HCT116 (cell line): ENCODE measurements at regions of chr13 and their contacts with region 1.

Region 1: GRCh38 chr13:33228648-33229445 is 56.7 kb downstream of the STARD13 start:
- DNase-seq: peak; percentile 26
- ATAC-seq: peak; percentile 79
- H3K4me3 ChIP-seq: no peak overlapping the region
- H3K27ac ChIP-seq: no peak overlapping the region
- H3K4me1 ChIP-seq: no peaks in the 10 kb centered on the region
- H3K27me3 ChIP-seq: no peaks in the 10 kb centered on the region
- CTCF ChIP-seq: peak; percentile 63 to 94 (median 86); a peak in 5 of 6 replicates
- POLR2A ChIP-seq: no peak
- RAD21 ChIP-seq: peak; percentile 83

Region 2: DNA sequence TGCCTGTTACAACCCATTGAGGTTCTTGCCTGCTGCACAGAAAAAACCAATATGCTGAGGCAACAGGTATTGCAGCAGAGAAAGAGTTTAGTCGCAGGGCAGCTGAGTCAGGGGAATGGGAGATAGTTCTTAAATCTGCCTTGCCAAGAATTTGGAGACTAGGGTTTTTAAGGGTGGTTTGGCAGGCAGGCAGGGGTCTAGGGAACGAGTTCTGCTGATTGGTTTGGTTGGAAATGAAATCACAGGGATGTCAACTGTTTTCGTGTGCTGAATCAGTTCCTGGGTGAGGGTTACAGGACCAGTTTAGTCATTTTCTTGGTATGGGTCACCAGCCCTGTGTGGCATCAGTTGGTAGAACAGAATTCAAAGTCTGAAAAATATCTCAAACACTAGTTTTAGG is 606.0 kb before region 1 on chr13:
- CTCF ChIA-PET with region 1: no interaction called
- POLR2A ChIA-PET with region 1: no interaction called
- RAD21 ChIA-PET with region 1: no interaction called
- intact Hi-C with region 1: no loop called
- DNase-seq: no peak
- ATAC-seq: no peak
- H3K4me3 ChIP-seq: no peak overlapping the region
- H3K27ac ChIP-seq: no peak overlapping the region
- H3K4me1 ChIP-seq: no peaks in the 10 kb centered on the region
- H3K27me3 ChIP-seq: no peaks in the 10 kb centered on the region
- CTCF ChIP-seq: no peak
- POLR2A ChIP-seq: no peak
- RAD21 ChIP-seq: no peak

Region 3: DNA sequence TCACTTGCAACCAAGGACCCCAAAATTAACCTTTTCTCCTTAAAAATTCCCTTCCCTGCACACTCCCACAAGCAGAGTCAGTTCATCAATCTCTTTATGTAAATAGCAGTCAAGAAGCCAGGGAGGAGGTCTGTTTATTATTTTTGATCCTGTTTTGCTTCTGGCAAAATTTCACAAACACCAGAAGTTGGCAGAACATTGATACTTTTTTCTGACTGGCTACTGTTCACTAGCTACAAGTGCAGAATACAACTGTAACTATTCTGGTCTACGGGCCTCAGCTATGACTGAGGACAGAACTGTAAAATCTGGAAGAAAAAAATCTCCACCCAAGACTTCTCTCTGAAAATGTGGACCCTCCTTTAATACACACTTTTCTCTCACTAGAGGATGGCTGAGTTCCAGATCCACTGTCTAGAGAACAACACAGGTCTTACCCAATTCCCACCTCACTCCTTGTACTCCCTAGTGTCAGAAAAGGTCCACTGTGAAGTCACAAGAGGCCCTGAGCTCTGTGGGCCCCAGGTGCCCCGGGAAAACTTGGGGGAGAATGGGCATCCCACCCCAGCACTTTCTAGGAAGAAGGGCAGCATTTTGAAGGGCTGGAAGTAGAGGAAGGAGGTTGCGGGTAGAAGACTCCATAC is 42.2 kb after region 1 on chr13:
- CTCF ChIA-PET with region 1: no interaction called
- POLR2A ChIA-PET with region 1: no interaction called
- RAD21 ChIA-PET with region 1: no interaction called
- intact Hi-C with region 1: no loop called
- DNase-seq: no peak
- ATAC-seq: no peak
- H3K4me3 ChIP-seq: no peak overlapping the region
- H3K27ac ChIP-seq: no peak overlapping the region
- H3K4me1 ChIP-seq: peaks cover 0 to 6% of the 10 kb centered on the region in 2 experiments; a peak in 1 of 4 replicates
- H3K27me3 ChIP-seq: no peaks in the 10 kb centered on the region
- CTCF ChIP-seq: no peak
- POLR2A ChIP-seq: no peak
- RAD21 ChIP-seq: no peak

Region 4: GRCh38 chr13:33367926-33368325 is 139.1 kb after region 1 on chr13:
- CTCF ChIA-PET with region 1: no interaction called
- POLR2A ChIA-PET with region 1: no interaction called
- RAD21 ChIA-PET with region 1: no interaction called
- intact Hi-C with region 1: no loop called
- DNase-seq: no peak
- ATAC-seq: no peak
- H3K4me3 ChIP-seq: no peak overlapping the region
- H3K27ac ChIP-seq: no peak overlapping the region
- H3K4me1 ChIP-seq: no peaks in the 10 kb centered on the region
- H3K27me3 ChIP-seq: no peaks in the 10 kb centered on the region
- CTCF ChIP-seq: no peak
- POLR2A ChIP-seq: no peak
- RAD21 ChIP-seq: no peak

Region 5: DNA sequence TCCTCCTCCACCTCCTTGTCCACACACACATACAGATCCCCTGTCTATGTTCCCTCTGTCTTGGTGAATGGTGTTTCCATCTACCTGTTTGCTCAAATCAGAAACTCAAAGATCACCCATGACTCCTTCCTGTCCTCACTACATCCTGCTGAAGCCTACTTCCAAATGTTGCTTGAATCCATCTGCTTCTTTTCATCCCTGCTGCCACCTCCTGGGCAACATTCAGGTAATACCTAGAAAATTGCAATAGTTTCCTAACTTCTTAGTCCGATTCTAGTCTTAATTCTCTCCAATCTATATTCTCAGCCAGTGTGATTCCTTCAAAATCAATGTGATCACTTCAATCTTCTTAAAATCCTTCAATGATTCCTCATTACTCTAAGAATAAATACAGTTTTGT is 212.2 kb after region 1 on chr13:
- CTCF ChIA-PET with region 1: no interaction called
- POLR2A ChIA-PET with region 1: no interaction called
- RAD21 ChIA-PET with region 1: no interaction called
- intact Hi-C with region 1: loop called (anchors 1 kb)
- DNase-seq: peak; percentile 15
- ATAC-seq: peak; percentile 76
- H3K4me3 ChIP-seq: no peak overlapping the region
- H3K27ac ChIP-seq: no peak overlapping the region
- H3K4me1 ChIP-seq: no peaks in the 10 kb centered on the region
- H3K27me3 ChIP-seq: no peaks in the 10 kb centered on the region
- CTCF ChIP-seq: peak; percentile 19 to 49 (median 31); a peak in 3 of 6 replicates
- POLR2A ChIP-seq: no peak
- RAD21 ChIP-seq: peak; percentile 57

Region 6: GRCh38 chr13:33723772-33724435 is 495.1 kb after region 1 on chr13:
- CTCF ChIA-PET with region 1: no interaction called
- POLR2A ChIA-PET with region 1: no interaction called
- RAD21 ChIA-PET with region 1: no interaction called
- intact Hi-C with region 1: loop called (anchors 1 kb)
- DNase-seq: peak; percentile 77
- ATAC-seq: peak; percentile 99
- H3K4me3 ChIP-seq: no peak overlapping the region
- H3K27ac ChIP-seq: no peak overlapping the region
- H3K4me1 ChIP-seq: no peaks in the 10 kb centered on the region; a peak in 1 of 4 replicates
- H3K27me3 ChIP-seq: no peaks in the 10 kb centered on the region
- CTCF ChIP-seq: peak; percentile 59 to 74 (median 65); a peak in 5 of 6 replicates
- POLR2A ChIP-seq: no peak
- RAD21 ChIP-seq: peak; percentile 86